Activated CD4-positive, alpha-beta T cell treated with anti-CD3 and anti-CD28 coated beads for 36 hours (primary cell): ENCODE measurements at regions of chr3 and their contacts with region 1.

Region 1: GRCh38 chr3:115848641-115849040 is 225.3 kb downstream of the GAP43 start:
- DNase-seq: no peak
- ATAC-seq: no peak
- H3K4me3 Mint-ChIP-seq: no peak overlapping the region
- H3K27ac Mint-ChIP-seq: no peak overlapping the region
- H3K4me1 Mint-ChIP-seq: no peaks in the 10 kb centered on the region
- H3K27me3 Mint-ChIP-seq: peaks cover 15% of the 10 kb centered on the region

Region 2: DNA sequence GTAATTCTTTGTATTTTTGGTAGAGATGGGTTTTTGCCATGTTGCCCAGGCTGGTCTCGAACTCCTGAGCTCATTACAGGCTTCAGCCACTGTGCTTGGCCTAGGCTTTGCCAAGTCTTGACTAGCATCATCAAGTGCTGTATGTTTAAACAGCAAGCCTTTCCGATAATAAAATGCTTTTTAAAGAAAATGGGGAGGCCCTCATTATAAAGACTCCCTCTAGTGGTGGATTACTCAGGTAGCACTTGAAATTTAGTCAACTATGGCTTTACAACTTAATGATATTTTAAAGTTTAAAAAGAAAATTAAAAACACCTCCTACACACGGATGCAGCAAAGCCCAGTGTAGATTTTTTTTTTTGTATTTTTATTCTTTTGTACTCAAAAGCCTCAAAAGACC is 11.7 kb before region 1 on chr3:
- CTCF ChIA-PET with region 1: interaction called, 13 read pairs
- POLR2A ChIA-PET with region 1: no interaction called
- intact Hi-C with region 1: no loop called
- DNase-seq: no peak
- ATAC-seq: no peak
- H3K4me3 Mint-ChIP-seq: no peak overlapping the region
- H3K27ac Mint-ChIP-seq: no peak overlapping the region
- H3K4me1 Mint-ChIP-seq: no peaks in the 10 kb centered on the region
- H3K27me3 Mint-ChIP-seq: peaks cover 5% of the 10 kb centered on the region